ENCODE measurements at regions of chr6 and their contacts with region 1.

Region 1: GRCh38 chr6:38208028-38208427 is 388.5 kb downstream of the ZFAND3 start:
- DNase-seq: no peak
- ATAC-seq: peak; percentile 26; the same call in 1 of the 2 replicates
- H3K4me3 ChIP-seq: no peak overlapping the region
- H3K27ac ChIP-seq: peak overlapping the region; percentile 48; the same call in 1 of the 2 replicates
- H3K4me1 ChIP-seq: peaks cover 18% of the 10 kb centered on the region
- H3K27me3 ChIP-seq: no peaks in the 10 kb centered on the region
- CTCF ChIP-seq: no peak

Region 2: DNA sequence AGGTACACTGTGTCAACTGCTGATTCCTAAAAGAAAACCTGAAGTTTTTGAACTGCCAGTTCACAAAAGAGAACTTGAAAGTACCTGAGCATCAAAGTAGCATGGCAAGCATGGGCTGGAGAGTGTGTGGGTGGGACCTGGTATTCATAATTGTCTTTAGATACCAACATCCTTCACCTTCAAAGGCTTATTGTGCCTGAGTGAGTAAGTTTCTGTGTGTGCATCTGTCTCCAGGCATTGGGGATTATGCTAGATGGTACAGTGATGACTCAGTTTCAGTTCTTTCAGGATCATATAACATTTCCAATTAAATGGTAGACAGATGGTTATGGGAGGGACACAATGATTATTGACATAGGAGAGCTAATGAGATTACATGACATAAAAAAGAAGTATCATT is 150.0 kb before region 1 on chr6:
- CTCF ChIA-PET with region 1: no interaction called
- POLR2A ChIA-PET with region 1: no interaction called
- in situ Hi-C with region 1: no loop called
- intact Hi-C with region 1: no loop called
- DNase-seq: no peak
- ATAC-seq: no peak
- H3K4me3 ChIP-seq: no peak overlapping the region
- H3K27ac ChIP-seq: no peak overlapping the region
- H3K4me1 ChIP-seq: no peaks in the 10 kb centered on the region; the same call in 1 of the 2 replicates
- H3K27me3 ChIP-seq: no peaks in the 10 kb centered on the region
- CTCF ChIP-seq: no peak

Region 3: GRCh38 chr6:38460186-38460585 is 252.2 kb after region 1 on chr6:
- CTCF ChIA-PET with region 1: no interaction called
- POLR2A ChIA-PET with region 1: no interaction called
- in situ Hi-C with region 1: no loop called
- intact Hi-C with region 1: no loop called
- DNase-seq: no peak
- ATAC-seq: no peak
- H3K4me3 ChIP-seq: no peak overlapping the region
- H3K27ac ChIP-seq: no peak overlapping the region
- H3K4me1 ChIP-seq: no peaks in the 10 kb centered on the region
- H3K27me3 ChIP-seq: no peaks in the 10 kb centered on the region
- CTCF ChIP-seq: no peak

Region 4: DNA sequence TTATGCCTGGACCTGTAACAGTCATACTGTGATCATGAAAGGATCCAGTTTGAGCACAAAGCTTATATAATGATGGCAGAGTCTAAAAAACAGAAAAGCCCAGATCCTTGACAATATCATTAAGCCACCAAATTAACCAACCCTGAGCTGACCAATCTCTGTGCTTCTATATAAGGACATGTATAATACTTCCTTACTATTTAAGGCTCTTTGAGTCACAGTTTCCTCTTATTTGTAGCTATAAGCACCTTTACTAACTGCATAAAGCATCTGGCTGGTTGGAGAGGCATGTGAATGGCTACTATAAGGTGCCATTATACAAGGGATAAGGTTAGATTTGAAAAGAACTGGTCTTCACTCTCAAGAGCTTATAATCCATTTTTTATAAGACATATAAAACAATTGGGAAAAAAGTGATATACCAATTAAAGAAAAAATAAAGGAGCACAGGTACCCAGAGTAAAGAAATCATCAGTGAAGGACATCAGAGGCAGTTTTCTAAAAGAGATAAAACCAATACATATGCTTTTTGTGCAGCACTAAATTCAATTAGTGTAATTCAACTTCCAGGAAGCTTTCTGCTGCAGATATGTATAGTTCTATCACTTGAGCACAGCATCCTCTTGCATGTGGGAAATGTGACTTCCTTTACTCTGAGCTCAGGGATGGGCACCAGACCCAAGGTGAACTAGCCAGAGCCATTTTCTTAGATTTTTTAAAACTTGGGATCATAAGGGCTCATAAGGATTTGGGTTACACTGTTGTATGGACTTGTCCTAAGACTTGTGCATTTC is 310.7 kb after region 1 on chr6:
- CTCF ChIA-PET with region 1: no interaction called
- POLR2A ChIA-PET with region 1: interaction called, 11 read pairs
- in situ Hi-C with region 1: no loop called
- intact Hi-C with region 1: no loop called
- DNase-seq: no peak
- ATAC-seq: no peak
- H3K4me3 ChIP-seq: no peak overlapping the region
- H3K27ac ChIP-seq: no peak overlapping the region
- H3K4me1 ChIP-seq: no peaks in the 10 kb centered on the region
- H3K27me3 ChIP-seq: no peaks in the 10 kb centered on the region
- CTCF ChIP-seq: no peak